PC-3 (cell line): ENCODE measurements at regions of chr5 and their contacts with region 1.

Region 1: GRCh38 chr5:159515909-159516415 is 185.7 kb upstream of the IL12B start:
- DNase-seq: peak; percentile 75
- ATAC-seq: no peak
- H3K4me3 ChIP-seq: no peak overlapping the region
- H3K27ac ChIP-seq: no peak overlapping the region
- H3K4me1 ChIP-seq: peaks cover 45% of the 10 kb centered on the region
- H3K27me3 ChIP-seq: no peaks in the 10 kb centered on the region
- CTCF ChIP-seq: peak; percentile 80

Region 2: GRCh38 chr5:159451197-159452052 is 64.5 kb before region 1 on chr5:
- CTCF ChIA-PET with region 1: interaction called, 25 read pairs
- POLR2A ChIA-PET with region 1: no interaction called
- intact Hi-C with region 1: loop called (anchors 1 kb)
- DNase-seq: peak; percentile 91
- ATAC-seq: peak; percentile 83
- H3K4me3 ChIP-seq: no peak overlapping the region
- H3K27ac ChIP-seq: peak overlapping the region; percentile 49
- H3K4me1 ChIP-seq: peaks cover 31% of the 10 kb centered on the region
- H3K27me3 ChIP-seq: no peaks in the 10 kb centered on the region
- CTCF ChIP-seq: no peak

Region 3: DNA sequence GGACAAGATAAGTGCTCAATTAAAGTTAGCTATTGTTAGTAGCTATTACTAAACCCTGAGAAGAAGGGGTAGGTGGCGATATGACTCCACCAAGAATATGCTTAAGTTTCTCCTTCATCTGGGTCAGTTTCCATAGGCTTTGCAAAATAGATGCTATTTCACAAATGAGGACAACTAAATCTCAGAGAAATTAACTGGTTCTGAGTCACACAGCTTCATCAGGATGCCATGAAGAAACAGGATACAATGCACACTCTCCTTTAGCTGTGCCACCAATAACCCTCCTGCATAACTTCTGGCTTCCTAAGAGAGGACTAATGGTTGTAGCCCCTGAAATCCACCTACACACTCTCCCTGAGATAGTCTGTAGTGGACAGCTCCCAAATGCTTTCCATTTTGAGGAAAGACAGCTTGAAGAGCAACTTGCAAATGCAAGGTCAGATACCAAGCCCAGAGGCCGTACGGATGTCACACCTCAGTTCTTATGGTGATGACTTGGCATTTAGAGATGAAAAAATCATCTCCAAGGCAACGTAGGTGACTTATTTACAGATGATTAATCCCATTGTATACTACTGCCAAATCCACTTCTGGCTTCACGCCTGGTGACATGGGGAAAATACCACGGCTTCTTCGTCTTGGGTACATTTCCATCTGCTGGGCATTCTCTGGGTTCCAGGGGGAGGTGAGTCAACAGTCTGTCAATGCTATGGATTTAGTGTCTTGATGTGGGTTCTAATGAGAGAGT is 65.7 kb after region 1 on chr5:
- CTCF ChIA-PET with region 1: no interaction called
- POLR2A ChIA-PET with region 1: no interaction called
- intact Hi-C with region 1: loop called (anchors 5 kb)
- DNase-seq: peak; percentile 95
- ATAC-seq: peak; percentile 73
- H3K4me3 ChIP-seq: no peak overlapping the region
- H3K27ac ChIP-seq: peak overlapping the region; percentile 80
- H3K4me1 ChIP-seq: peaks cover 31% of the 10 kb centered on the region
- H3K27me3 ChIP-seq: no peaks in the 10 kb centered on the region
- CTCF ChIP-seq: peak; percentile 26; the same call in 1 of the 2 replicates

Region 4: DNA sequence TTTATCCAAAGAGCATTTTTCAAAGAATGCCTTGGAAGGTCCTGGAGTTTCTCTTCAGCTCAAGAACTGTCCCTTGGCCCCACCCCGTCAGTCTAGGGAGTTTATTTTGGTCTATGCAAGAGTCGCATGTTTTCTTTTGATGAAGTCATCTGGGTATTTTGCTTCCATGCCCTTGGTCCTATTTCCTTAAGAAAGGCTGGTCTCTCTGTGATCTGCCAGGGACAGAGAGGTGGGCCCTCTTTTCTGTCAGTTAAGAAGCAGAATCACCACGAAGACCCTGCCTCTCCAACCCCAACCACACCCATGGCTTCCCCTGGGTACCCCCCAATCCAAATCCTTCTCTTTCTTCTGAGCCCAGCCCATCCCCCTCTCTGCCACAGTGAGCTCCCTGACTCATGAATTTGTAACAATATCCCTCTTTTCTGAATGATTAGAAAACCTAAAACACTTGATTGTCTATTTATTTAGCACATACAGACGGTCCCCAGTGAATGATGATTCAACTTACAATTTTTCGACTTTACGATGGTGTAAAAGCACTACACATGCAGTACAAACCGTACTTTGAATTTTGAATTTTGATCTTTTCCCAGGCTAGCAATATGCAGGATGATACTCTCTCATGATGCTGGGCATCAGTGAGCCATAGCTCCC is 236.8 kb after region 1 on chr5:
- CTCF ChIA-PET with region 1: no interaction called
- POLR2A ChIA-PET with region 1: no interaction called
- intact Hi-C with region 1: loop called (anchors 10 kb)
- DNase-seq: peak; percentile 74
- ATAC-seq: peak; percentile 71
- H3K4me3 ChIP-seq: peak overlapping the region; percentile 32
- H3K27ac ChIP-seq: peak overlapping the region; percentile 87
- H3K4me1 ChIP-seq: peaks cover 56% of the 10 kb centered on the region
- H3K27me3 ChIP-seq: no peaks in the 10 kb centered on the region
- CTCF ChIP-seq: no peak

Region 5: GRCh38 chr5:159826351-159827214 is 310.6 kb after region 1 on chr5:
- CTCF ChIA-PET with region 1: no interaction called
- POLR2A ChIA-PET with region 1: no interaction called
- intact Hi-C with region 1: loop called (anchors 10 kb)
- DNase-seq: peak; percentile 96
- ATAC-seq: peak; percentile 94
- H3K4me3 ChIP-seq: peak overlapping the region; percentile 9; the same call in 1 of the 2 replicates
- H3K27ac ChIP-seq: peak overlapping the region; percentile 95
- H3K4me1 ChIP-seq: peaks cover 36% of the 10 kb centered on the region
- H3K27me3 ChIP-seq: no peaks in the 10 kb centered on the region
- CTCF ChIP-seq: no peak

Region 6: DNA sequence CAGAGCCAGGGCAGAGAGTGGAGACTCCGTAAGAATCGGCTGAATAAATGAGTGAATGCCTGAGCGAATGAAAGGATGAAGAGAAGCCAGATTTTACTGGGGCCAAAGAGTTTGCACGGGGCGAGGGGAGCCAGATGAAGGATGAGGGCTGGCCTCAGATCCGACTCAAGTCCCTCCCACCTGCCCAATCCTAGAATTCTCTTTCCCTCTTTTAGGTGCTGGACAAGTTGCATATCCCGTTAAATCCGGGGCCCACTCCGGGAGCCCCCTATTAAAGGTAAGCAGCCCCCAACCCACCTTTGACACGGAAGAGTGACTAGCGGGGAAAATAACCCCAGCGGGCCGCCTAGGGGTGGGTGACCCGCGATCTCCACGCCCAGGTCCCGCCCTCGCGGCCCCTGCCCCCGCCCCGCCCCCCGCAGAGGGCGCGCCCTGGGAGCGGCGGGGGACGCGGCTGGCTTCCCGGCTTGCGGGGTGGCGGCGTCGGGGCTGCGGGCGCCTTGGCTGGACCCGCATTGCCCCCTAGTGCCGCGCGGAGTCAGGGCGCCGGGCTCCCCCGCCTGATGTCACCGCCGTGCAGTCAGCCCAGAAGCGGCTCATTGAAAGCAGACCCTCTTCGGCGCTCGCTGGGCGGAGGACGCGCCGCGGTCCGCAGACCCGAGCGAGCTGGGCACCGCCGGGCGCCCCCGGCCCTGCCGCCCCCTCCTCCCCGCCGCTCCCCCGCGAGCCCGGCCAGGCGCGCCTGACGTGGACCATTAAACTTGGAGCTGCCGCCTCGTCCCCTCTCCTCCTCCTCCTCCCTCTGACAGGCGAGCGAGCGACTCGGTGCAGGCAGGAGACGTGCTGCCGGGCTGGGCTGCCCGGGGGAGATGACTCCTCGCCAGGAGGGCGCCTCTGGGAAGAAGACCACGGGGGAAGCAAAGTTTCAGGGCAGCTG is 400.2 kb after region 1 on chr5 and contains the start of gene ADRA1B:
- CTCF ChIA-PET with region 1: no interaction called
- POLR2A ChIA-PET with region 1: no interaction called
- intact Hi-C with region 1: loop called (anchors 2 kb)
- DNase-seq: peak; percentile 68
- ATAC-seq: peak; percentile 90
- H3K4me3 ChIP-seq: peak within 1 kb of the TSS; percentile 68
- H3K27ac ChIP-seq: no peak within 1 kb of the TSS
- H3K4me1 ChIP-seq: peaks cover 34% of the 10 kb centered on the region
- H3K27me3 ChIP-seq: no peaks in the 10 kb centered on the region
- CTCF ChIP-seq: peak; percentile 53
- total RNA-seq, gene ADRA1B: 0.29 and 0.40 TPM in 2 replicates

Region 7: DNA sequence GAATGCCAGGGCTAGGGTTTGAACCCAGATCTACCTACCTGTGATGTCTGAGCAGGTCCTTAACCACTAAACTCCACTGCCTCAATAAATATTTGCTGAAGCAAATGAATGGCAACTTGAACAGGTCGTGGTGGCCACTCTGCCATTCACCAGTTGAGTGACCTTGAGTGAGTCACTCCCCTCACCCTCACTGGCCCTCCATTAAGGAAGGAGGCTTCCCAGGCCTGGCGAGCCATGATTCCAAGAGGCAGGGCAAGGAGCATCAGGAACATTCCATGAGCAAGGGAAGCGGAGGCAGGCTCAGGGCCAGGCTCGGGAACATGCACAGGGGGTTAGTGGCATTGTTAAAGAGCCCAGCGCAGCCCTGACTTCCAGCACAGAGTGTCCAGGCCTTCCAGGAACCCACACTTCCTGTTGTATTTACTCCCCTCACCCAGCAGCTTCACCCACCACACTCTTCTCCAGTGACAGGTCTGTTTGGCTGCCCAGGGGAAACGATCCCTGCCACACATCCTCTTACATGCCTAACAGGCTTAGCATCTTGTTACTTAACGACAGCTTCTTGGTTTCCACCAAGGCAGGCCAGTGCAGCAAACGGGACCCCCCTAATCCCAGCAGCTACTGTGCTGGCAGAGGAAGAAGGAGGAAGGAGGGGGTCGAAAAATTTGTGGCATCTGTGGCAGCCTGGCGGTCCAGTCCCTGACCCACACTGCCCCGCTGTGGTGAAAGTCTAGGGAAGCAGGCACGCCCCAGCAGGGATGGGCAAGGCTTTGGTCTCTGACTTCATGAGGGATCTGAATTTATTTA is 449.3 kb after region 1 on chr5:
- CTCF ChIA-PET with region 1: no interaction called
- POLR2A ChIA-PET with region 1: no interaction called
- intact Hi-C with region 1: loop called (anchors 2 kb)
- DNase-seq: peak; percentile 69
- ATAC-seq: peak; percentile 90
- H3K4me3 ChIP-seq: no peak overlapping the region
- H3K27ac ChIP-seq: no peak overlapping the region
- H3K4me1 ChIP-seq: peaks cover 7% of the 10 kb centered on the region; the same call in 1 of the 2 replicates
- H3K27me3 ChIP-seq: no peaks in the 10 kb centered on the region
- CTCF ChIP-seq: peak; percentile 82